ENCODE measurements at regions of chr17 and their contacts with region 1.

Region 1: GRCh38 chr17:35227546-35227945 is 15.3 kb upstream of the SLFN5 start:
- DNase-seq: no peak
- ATAC-seq: no peak
- H3K4me3 ChIP-seq: no peak overlapping the region
- H3K27ac ChIP-seq: no peak overlapping the region
- H3K4me1 ChIP-seq: no peaks in the 10 kb centered on the region
- H3K27me3 ChIP-seq: no peaks in the 10 kb centered on the region

Region 2: DNA sequence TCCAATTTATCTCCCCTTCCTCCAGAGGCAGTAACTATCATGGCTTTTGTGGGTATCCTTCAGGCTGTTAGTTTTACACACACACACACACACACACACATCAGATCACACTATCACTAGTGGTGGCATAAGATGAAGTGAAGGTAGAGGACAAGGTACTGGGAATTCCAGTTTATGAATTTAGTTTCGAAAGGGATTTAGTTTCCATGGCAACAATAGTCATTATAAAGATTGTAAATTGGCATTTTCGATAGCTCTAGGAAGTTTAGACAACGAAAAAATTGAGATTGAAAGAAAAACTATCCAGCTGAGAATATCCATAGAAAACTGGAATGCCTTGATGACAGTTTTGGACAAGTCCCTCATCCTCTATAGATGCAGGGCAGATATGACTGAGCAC is 46.1 kb after region 1 on chr17:
- intact Hi-C with region 1: loop called in 1 of 2 experiments (anchors 10 kb)
- DNase-seq: no peak
- ATAC-seq: no peak
- H3K4me3 ChIP-seq: no peak overlapping the region
- H3K27ac ChIP-seq: no peak overlapping the region
- H3K4me1 ChIP-seq: no peaks in the 10 kb centered on the region
- H3K27me3 ChIP-seq: no peaks in the 10 kb centered on the region

Measured in aorta (tissue), 5 donors.